Heart left ventricle (tissue), 16 donors: ENCODE measurements at regions of chr11 and their contacts with region 1.

Region 1: GRCh38 chr11:84899740-84900139 is 727.4 kb downstream of the DLG2 start:
- DNase-seq: no peak
- ATAC-seq: no peak
- H3K4me3 ChIP-seq: no peak overlapping the region
- H3K27ac ChIP-seq: no peak overlapping the region
- H3K4me1 ChIP-seq: peaks cover 0 to 12% (median 6%) of the 10 kb centered on the region in 12 donors
- H3K27me3 ChIP-seq: no peaks in the 10 kb centered on the region
- CTCF ChIP-seq: peak in 2 of 12 donors; percentile 27 to 33
- POLR2A ChIP-seq: no peak

Region 2: DNA sequence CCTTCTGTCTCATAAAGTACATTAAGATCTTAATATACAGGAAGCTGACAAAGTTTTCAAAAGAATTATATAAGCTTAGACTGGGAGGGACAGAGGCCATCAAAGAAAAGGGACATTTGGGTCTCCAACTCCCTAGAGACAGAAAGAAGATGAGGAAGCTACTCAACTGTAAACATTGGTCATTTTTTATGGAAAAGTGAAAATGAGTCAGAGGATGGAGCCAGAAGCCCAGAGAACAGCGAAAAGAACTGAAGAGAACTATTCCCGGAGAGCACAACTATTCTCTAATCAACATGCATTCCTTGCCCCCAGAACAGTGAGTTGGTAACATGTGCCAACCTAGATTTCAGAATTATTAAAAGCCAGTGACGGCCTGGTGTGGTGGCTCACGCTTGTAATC is 51.9 kb before region 1 on chr11:
- intact Hi-C with region 1: loop called in 1 of 10 experiments (anchors 10 kb)
- DNase-seq: no peak
- ATAC-seq: no peak
- H3K4me3 ChIP-seq: no peak overlapping the region
- H3K27ac ChIP-seq: no peak overlapping the region
- H3K4me1 ChIP-seq: no peaks in the 10 kb centered on the region
- H3K27me3 ChIP-seq: no peaks in the 10 kb centered on the region
- CTCF ChIP-seq: no peak
- POLR2A ChIP-seq: no peak